ENCODE measurements at regions of chr9 and their contacts with region 1.

Region 1: DNA sequence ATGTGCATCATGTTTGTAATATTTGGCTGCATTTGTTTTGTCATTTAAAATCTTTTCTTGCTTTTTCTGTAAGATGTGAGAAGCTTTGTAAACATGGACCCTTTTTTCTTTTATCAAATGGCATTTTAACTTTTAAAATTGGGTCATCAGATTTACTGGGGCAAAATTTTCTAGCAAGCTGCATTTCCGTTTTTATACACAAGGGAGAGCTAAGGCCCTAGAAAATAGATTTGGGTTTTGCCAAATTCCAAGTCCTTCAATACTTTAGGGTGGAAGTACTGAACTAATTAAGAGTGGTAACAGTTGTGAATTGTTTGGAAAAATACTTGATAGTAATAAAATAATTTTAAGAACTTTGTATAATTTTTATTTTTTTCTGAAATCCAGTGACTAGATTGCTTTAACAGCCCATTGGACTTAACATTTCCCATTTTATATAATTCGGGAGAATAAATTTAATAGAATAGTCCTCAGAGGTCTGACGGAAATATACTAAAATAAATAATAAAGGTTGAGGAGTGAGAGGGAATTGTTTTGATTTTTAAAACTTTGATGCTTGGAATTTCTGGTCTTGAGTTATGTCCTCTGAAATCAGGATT is 117.4 kb downstream of the SMARCA2 start:
- DNase-seq: no peak
- H3K4me3 Mint-ChIP-seq: no peak overlapping the region
- H3K27ac Mint-ChIP-seq: no peak overlapping the region
- H3K4me1 Mint-ChIP-seq: no peaks in the 10 kb centered on the region
- H3K27me3 Mint-ChIP-seq: no peaks in the 10 kb centered on the region
- CTCF ChIP-seq: peak; percentile 34

Region 2: DNA sequence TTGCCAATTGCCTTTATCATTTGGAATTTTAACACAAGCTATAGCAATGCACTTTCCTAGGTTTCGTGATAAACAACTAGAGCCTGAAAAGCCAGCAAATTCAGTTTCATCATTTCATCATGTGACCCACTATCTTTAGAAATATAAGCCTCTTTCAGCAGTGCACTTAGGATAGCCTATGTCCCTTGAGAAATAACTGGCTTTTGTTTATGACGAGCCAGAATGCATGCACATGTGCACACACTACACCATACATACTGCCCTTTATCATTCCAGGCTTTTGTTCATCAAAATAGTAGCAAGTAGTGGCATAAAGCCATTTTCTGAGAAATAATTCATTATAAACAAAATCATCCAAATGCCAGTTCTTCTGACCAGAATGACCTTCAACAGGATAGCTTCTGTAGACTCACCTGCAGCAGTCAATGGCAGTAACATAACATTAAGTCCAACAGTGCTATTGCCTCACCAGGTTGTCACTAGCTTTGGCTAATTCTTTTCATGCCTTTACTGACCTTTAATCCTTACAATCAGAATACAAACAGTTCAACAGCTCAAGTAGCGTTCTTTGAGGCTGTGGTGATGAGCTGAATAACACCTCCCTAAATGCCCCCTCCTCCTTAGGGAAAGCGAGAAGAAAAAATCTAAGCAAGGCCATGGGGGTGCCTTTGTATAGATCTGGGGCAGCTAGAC is 249.7 kb before region 1 on chr9:
- CTCF ChIA-PET with region 1: no interaction called
- intact Hi-C with region 1: no loop called
- DNase-seq: no peak
- H3K4me3 Mint-ChIP-seq: no peak overlapping the region
- H3K27ac Mint-ChIP-seq: no peak overlapping the region
- H3K4me1 Mint-ChIP-seq: no peaks in the 10 kb centered on the region
- H3K27me3 Mint-ChIP-seq: no peaks in the 10 kb centered on the region
- CTCF ChIP-seq: no peak

Region 3: GRCh38 chr9:2181792-2182191 is 49.2 kb after region 1 on chr9:
- CTCF ChIA-PET with region 1: interaction called, 3 read pairs
- intact Hi-C with region 1: loop called (anchors 2 kb)
- DNase-seq: peak; percentile 37
- H3K4me3 Mint-ChIP-seq: no peak overlapping the region
- H3K27ac Mint-ChIP-seq: no peak overlapping the region
- H3K4me1 Mint-ChIP-seq: peaks cover 11% of the 10 kb centered on the region
- H3K27me3 Mint-ChIP-seq: no peaks in the 10 kb centered on the region
- CTCF ChIP-seq: no peak

Region 4: GRCh38 chr9:2248768-2249167 is 116.2 kb after region 1 on chr9:
- CTCF ChIA-PET with region 1: no interaction called
- intact Hi-C with region 1: loop called (anchors 5 kb)
- DNase-seq: no peak
- H3K4me3 Mint-ChIP-seq: no peak overlapping the region
- H3K27ac Mint-ChIP-seq: no peak overlapping the region
- H3K4me1 Mint-ChIP-seq: peaks cover 18% of the 10 kb centered on the region
- H3K27me3 Mint-ChIP-seq: no peaks in the 10 kb centered on the region
- CTCF ChIP-seq: no peak

Region 5: GRCh38 chr9:2281031-2281802 is 148.6 kb after region 1 on chr9:
- CTCF ChIA-PET with region 1: no interaction called
- intact Hi-C with region 1: no loop called
- DNase-seq: peak; percentile 4
- H3K4me3 Mint-ChIP-seq: no peak overlapping the region
- H3K27ac Mint-ChIP-seq: no peak overlapping the region
- H3K4me1 Mint-ChIP-seq: no peaks in the 10 kb centered on the region
- H3K27me3 Mint-ChIP-seq: peaks cover 14% of the 10 kb centered on the region
- CTCF ChIP-seq: no peak

Region 6: GRCh38 chr9:2727966-2728613 is 595.5 kb after region 1 on chr9:
- CTCF ChIA-PET with region 1: no interaction called
- intact Hi-C with region 1: loop called (anchors 2 kb)
- DNase-seq: peak; percentile 7
- H3K4me3 Mint-ChIP-seq: no peak overlapping the region
- H3K27ac Mint-ChIP-seq: no peak overlapping the region
- H3K4me1 Mint-ChIP-seq: no peaks in the 10 kb centered on the region
- H3K27me3 Mint-ChIP-seq: no peaks in the 10 kb centered on the region
- CTCF ChIP-seq: peak; percentile 24